Activated CD4-positive, alpha-beta memory T cell treated with anti-CD3 and anti-CD28 coated beads for 36 hours (primary cell): ENCODE measurements at regions of chr16 and their contacts with region 1.

Region 1: DNA sequence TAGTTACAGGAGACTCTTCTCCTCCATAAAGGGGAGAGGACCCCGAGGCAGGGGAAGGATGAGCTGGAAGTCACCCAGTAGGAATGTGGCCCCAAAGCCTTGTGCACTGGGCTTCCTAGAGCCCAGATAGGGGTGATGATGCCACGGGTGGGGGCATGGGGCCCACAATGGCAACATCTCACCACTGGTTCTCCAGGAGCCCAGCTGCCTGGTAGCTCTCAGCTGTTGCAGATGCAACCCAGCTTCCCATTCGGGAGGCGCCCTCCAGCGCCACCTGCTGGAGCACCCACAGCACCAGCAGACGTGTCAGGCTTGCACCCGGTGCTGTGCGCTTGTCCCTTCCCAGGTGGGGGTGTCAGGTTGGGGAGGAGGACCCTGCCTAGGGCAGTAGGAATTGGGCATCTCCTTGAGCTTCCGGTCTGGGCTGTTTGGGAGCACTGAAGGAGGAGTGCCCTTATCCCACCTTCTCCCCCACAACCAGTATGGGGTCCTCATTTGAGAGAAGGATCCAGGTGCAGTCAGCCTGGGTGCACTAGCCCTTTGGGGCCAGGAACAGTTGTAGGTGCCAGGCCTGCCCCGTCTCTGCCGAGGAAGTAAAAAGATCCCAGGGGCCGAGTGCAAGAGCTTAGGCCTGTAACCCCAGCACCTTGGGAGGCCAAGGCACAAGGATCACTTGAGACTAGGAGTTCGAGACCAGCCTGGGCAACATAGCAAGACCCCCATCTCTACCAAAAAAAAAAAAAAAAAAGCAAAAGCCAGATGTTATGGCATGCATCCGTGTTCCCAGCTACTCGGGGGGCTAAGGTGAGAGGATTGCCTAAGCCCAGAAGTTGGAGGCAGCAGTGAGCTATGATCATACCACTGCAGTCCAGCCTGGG is 14.4 kb downstream of the CDIPT start:
- DNase-seq: peak; percentile 88
- H3K4me3 Mint-ChIP-seq: no peak overlapping the region
- H3K27ac Mint-ChIP-seq: no peak overlapping the region
- H3K4me1 Mint-ChIP-seq: peaks cover 6% of the 10 kb centered on the region
- H3K27me3 Mint-ChIP-seq: no peaks in the 10 kb centered on the region

Region 2: GRCh38 chr16:29815793-29816693 is 32.6 kb before region 1 on chr16 and contains the start of gene PAGR1:
- CTCF ChIA-PET with region 1: interaction called, 62 read pairs
- POLR2A ChIA-PET with region 1: interaction called, 8 read pairs
- intact Hi-C with region 1: loop called (anchors 2 kb)
- DNase-seq: peak; percentile 99
- H3K4me3 Mint-ChIP-seq: peak within 1 kb of the TSS; percentile 98
- H3K27ac Mint-ChIP-seq: peak within 1 kb of the TSS; percentile 90
- H3K4me1 Mint-ChIP-seq: peaks cover 41% of the 10 kb centered on the region
- H3K27me3 Mint-ChIP-seq: no peaks in the 10 kb centered on the region
- total RNA-seq, gene PAGR1: 21.9 to 24.0 TPM

Region 3: DNA sequence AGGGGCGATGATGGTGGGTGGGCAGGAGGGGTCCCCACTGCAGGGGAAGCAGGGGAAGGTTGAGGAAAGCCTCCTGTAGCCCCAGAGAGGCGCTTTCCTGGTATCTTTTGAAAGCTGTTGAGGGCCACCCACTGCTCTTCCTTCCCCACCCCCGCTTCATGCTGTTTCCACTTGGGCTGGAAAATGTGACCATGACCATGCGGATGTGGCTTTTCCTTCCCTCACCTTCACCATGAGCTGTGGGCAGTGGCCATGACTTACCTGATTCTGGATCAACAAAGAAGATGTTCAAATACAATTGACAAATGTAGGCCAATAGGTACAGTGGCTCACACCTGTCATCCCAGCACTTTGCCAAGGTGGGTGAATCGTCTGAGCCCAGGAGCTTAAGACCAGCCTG is 14.6 kb before region 1 on chr16:
- CTCF ChIA-PET with region 1: interaction called, 24 read pairs
- POLR2A ChIA-PET with region 1: no interaction called
- intact Hi-C with region 1: no loop called
- DNase-seq: peak; percentile 60
- H3K4me3 Mint-ChIP-seq: no peak overlapping the region
- H3K27ac Mint-ChIP-seq: peak overlapping the region; percentile 18
- H3K4me1 Mint-ChIP-seq: peaks cover 22% of the 10 kb centered on the region
- H3K27me3 Mint-ChIP-seq: no peaks in the 10 kb centered on the region

Region 4: DNA sequence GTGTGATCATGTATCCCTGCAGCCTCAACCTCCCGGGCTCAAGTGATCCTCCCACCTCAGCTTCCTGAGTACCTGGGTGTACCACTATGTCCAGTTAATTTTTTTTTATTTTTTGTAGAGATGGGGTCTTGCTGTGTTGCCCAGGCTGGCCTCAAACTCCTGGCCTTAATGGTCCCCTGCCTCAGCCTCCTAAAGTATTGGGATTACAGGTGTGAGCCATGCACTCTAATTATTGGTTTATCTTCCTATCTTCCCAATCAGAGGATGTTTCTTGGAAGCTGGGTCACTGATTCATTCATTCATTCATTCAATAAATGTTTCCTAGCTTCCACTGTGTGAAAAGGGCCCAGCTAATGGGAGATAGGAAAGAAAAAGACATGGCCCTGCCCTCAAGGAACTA is 60.1 kb after region 1 on chr16:
- CTCF ChIA-PET with region 1: no interaction called
- POLR2A ChIA-PET with region 1: no interaction called
- intact Hi-C with region 1: no loop called
- DNase-seq: no peak
- H3K4me3 Mint-ChIP-seq: no peak overlapping the region
- H3K27ac Mint-ChIP-seq: no peak overlapping the region
- H3K4me1 Mint-ChIP-seq: no peaks in the 10 kb centered on the region
- H3K27me3 Mint-ChIP-seq: no peaks in the 10 kb centered on the region

Region 5: GRCh38 chr16:29926005-29926710 is 77.5 kb after region 1 on chr16 and contains the start of gene KCTD13:
- CTCF ChIA-PET with region 1: interaction called, 12 read pairs
- POLR2A ChIA-PET with region 1: no interaction called
- intact Hi-C with region 1: no loop called
- DNase-seq: peak; percentile 93
- H3K4me3 Mint-ChIP-seq: peak within 1 kb of the TSS; percentile 82
- H3K27ac Mint-ChIP-seq: peak within 1 kb of the TSS; percentile 89
- H3K4me1 Mint-ChIP-seq: peaks cover 36% of the 10 kb centered on the region
- H3K27me3 Mint-ChIP-seq: no peaks in the 10 kb centered on the region
- total RNA-seq, gene KCTD13: 36.6 to 37.9 TPM